Panc1 (cell line): ENCODE measurements at regions of chr1 and their contacts with region 1.

Region 1: DNA sequence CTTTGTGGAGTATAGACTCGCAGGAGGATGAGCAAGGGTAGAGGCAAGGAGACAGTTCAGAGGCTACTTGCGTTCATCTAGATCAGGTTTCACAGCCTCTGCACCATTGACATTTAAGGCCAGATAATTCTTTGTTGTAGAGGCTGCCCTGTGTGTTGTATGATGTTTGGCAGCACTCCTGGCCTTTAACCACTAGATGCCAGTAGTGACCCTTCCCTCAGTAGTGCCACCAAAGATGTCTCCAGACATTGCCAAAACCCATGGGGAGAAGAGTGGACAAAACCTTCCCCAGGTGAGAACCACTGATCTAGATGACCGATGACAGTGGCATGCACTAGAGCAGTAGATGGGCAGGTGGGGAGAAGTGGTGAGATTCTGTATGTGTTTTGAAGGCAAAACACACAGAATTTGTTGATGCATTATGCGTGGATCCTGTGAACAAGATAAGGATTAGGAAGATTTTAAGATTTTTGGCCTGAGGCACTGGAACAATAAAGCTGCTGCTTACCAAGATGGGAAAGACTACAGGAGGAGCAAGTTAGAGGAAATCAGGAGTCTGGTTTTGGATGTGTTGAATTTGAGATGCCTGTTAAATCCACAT is 9.9 kb upstream of the COG2 start:
- DNase-seq: peak; percentile 36
- ATAC-seq: peak; percentile 90
- H3K4me3 ChIP-seq: no peak overlapping the region
- H3K27ac ChIP-seq: no peak overlapping the region
- H3K4me1 ChIP-seq: no peaks in the 10 kb centered on the region
- H3K27me3 ChIP-seq: peaks cover 4% of the 10 kb centered on the region
- CTCF ChIP-seq: peak; percentile 81

Region 2: DNA sequence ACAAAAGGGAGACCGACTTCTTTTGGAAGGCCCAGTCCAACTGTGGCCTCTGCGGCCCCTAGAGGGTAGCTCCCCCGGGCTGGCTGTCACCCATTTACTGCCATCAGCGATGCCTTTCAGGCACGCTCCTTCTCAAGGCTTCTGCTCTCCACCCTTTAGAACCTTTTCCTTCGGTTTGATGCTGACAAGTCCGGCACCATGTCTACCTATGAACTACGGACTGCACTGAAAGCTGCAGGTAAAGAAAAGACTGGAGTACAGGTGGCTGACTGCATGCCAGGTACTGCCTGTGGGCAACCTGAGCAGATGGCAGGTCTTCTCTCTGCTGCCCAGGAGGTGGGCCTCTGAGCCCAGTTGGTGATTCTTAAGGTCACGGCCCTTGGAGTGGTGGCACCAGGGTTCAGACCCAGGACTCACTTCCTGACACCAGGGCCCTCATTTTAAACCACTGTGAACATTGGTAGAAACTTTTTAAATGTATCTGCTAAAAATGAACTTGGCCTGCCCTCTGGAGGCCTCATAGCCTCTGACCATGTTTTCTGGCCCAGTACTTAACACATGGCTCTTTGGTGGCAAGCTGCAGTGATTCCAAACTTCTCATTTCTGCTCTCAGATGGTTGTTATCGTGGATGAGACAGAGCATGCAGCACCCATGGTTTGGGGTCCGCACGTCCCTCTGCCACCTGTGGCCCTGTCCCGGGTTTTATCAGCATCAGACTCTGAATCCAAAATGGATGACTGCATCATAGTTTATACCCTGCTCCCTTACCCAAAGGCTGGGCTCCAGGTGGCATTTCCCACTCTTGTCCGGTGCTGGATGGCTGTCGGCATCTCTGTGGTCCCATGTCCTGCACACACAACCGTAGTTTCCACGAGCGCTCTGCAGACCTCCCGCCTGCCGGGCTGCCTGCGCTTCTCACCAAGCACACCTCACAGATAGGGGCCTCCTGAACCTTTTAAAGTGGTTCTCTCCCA is 160.6 kb after region 1 on chr1:
- CTCF ChIA-PET with region 1: no interaction called
- POLR2A ChIA-PET with region 1: no interaction called
- in situ Hi-C with region 1: no loop called
- intact Hi-C with region 1: loop called (anchors 5 kb)
- DNase-seq: no peak
- ATAC-seq: peak; percentile 60; the same call in 1 of the 2 replicates
- H3K4me3 ChIP-seq: no peak overlapping the region
- H3K27ac ChIP-seq: no peak overlapping the region
- H3K4me1 ChIP-seq: no peaks in the 10 kb centered on the region
- H3K27me3 ChIP-seq: no peaks in the 10 kb centered on the region
- CTCF ChIP-seq: peak; percentile 51

Region 3: DNA sequence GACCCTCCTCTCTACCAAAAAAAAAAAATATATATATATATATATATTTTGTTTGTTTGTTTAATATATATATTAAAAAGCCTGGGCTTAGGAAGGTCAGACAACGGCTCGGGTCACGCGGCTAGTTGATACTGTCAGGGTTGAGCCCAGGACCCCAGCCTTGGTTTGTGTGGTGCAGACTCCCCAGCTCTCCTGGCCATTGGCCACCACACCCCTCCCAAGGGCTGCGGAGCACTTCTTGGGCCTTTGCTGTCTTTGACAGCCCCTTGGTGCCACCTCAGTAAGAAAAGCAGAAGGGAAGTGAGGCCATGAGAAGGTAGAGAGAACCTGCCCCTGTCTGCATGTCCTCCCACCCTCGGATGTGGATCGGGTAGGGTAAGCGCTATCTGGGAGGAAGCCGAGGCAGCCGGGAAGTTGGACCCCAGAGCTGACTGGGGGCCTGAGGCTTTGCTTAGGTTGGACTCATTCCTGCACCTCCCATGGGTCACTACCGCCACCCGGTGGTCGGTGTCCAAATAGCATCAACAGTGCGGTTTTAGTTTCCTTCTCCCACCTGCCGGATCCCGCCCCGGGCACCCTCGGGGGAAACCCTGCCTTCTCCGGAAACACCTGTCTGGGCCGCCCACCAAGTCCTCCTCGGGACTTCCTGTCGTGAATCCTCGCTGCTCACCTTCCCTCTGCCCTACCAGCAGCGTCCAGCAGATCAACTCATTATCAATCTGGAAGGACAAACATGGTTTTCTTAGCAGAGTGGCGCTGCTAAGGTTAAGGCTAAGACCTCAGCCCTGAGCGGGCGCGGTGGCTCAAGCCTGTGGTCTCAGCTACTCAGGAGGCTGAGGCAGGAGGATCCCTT is 578.9 kb after region 1 on chr1:
- CTCF ChIA-PET with region 1: no interaction called
- POLR2A ChIA-PET with region 1: no interaction called
- in situ Hi-C with region 1: no loop called
- intact Hi-C with region 1: loop called (anchors 10 kb)
- DNase-seq: peak; percentile 59
- ATAC-seq: peak; percentile 94
- H3K4me3 ChIP-seq: peak overlapping the region; percentile 56 to 69
- H3K27ac ChIP-seq: no peak overlapping the region; the same call in 1 of the 2 replicates
- H3K4me1 ChIP-seq: 0 out of 2 replicates have a peak, but pooled peaks cover 3% of the 10 kb centered on the region
- H3K27me3 ChIP-seq: no peaks in the 10 kb centered on the region
- CTCF ChIP-seq: peak; percentile 94